Posterior cingulate gyrus (tissue), 11 donors: ENCODE measurements at regions of chr19 and their contacts with region 1.

Region 1: DNA sequence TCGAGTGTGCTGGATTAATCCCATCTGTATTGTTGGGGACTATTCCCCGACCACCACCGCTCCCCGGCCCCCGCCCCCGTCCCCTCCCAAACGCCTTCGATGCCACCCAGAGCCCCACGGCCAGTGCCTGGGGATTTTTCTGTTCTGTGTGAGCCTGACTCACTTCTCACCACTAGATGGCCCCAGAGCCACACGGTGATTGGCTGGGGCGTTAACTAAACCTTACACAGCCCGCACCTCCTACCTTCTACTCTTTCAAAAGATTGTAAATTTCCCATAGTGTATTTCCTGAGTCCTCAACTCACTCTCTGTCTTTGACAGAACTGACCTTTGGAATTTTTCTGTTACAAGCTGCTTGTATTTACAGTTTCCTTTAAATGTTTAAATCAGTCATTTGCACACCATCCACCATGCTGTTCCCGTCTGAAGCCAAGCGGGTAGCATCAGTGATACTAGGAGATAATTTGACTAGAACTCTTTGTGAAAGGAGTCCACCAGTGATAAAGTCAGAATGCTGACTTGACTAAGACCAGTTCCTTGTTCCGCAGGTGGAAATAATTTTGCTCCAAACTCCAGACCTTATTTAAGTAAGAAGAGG is 61.4 kb downstream of the RFX2 start:
- DNase-seq: peak; percentile 31 to 96 (median 74)

Region 2: GRCh38 chr19:6125571-6125989 is 76.7 kb after region 1 on chr19:
- intact Hi-C with region 1: loop called (anchors 1 kb)
- DNase-seq: peak in 4 of 10 donors; percentile 29 to 85 (median 36)

Region 3: DNA sequence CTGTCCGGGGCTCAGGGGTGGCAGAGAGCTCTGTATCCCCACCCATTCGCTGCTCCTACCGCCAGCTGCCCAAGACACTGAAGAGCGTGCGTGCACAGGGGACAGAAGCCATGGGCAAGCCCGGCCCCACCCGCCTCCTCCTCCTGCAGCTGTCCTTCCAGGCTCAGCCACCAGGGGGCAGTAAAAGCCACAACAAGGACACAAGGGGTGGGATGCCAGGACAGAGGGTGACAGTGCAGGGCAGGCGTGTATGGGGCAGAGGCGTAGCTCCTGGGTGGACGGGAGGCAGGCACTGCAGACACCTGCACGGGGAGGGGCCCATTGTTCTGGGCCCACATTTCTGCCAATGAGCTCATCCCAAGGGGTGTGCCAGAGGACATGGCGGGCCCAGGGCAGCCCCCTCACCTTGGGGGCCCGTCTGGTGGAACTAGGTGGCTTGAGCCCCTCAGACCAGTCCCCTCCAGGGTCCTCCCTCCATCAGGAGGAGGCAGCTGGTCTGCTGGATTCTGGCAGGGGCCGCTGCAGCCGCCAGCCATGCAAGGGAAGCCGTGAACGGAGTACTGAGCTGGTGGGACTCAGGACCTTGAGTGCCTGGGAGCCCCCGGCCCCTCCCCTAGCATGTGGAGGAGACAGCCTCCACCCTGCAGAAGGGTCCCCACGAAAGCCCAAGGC is 169.7 kb after region 1 on chr19:
- intact Hi-C with region 1: loop called (anchors 5 kb)
- DNase-seq: peak; percentile 69 to 98 (median 93)

Region 4: DNA sequence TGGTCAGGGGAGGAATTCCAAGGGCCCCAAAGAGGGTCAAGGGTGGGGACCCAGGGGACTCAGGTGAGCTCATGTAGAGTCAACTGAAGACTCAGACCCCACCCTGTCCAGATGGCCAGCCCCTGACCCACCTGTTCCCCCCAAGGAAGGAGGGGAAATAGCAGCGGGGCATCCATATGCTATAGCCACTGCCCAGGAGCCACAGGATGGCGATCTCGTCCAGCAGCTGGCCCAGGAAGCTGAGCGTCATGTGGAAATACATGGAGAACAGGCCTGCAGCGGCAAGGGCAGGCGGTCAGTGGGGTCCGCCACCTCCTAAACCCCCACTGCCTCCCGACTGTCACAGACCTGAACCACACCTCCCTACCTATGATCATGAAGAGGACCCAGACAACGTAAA is 263.1 kb after region 1 on chr19:
- intact Hi-C with region 1: loop called (anchors 10 kb)
- DNase-seq: peak in 1 of 10 donors; percentile 46

Region 5: DNA sequence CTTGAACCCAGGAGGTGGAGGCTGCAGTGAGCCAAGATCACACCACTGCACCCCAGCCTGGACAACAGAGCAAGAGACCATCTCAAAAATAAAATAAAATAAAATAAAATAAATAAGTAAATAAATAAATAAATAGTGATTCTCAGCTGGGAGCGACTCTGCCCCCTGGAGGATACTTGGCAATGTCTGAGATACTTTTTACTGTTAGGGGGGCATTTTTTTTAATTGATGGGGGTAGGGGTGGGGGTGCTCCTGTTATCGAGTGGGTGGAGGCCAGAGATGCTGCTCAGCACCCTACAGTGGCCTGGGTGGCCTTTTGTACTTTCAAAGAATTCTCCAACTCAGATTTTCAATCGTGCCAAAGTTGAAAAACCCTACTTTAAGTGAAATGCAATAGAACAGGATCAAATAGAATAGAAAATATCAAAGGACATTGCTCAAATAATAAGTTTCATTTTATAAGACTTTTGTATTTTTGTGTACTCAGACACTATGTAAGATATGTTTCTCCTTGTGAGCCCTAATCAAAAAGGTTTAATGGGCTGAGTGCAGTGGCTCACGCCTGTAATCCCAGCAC is 305.3 kb after region 1 on chr19:
- intact Hi-C with region 1: loop called (anchors 5 kb)
- DNase-seq: no peak